ENCODE measurements at regions of chr16 and their contacts with region 1.

Region 1: DNA sequence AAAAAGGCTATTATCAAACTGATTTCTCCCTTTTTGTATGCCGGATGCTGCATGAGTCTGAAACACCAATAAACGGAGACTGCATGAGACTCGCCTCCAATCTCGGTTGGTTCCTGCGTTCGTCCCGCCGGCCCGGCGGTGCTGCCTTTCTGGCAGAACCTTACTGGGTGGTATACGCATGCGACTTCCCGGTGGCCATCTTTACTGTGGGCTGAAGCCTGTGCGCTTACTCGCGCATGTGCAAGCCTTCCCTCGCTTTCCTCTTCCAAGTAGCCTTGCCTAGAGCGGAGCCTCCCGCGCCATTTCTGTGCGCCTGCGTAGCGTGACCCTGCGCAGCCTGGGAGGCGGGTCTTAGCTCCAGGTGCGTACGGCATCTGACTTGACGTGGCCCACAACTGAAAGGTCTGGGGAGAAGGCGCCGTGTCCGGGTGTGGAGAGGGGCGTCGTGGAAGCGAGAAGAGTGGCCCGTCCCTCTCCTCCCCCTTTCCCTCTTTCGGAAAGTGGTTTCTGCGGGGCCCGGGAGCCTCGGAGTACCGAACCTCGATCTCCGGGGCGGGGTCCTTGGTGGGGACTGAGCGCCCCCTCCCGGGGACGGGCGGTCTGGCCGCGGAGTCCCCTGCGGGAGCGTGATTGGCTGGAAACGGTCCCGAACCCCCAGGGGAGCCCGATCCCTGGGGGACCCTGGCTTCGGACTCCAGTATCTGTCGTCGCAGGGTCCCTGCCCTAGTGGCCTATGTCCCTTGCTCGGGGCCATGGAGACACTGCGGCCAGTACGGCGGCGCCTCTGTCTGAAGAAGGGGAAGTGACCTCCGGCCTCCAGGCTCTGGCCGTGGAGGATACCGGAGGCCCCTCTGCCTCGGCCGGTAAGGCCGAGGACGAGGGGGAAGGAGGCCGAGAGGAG is at the start of gene PAGR1:
- DNase-seq: peak; percentile 99
- H3K4me3 Mint-ChIP-seq: peak within 1 kb of the TSS; percentile 93
- H3K27ac Mint-ChIP-seq: peak within 1 kb of the TSS; percentile 96
- H3K4me1 Mint-ChIP-seq: peaks cover 55% of the 10 kb centered on the region
- H3K27me3 Mint-ChIP-seq: no peaks in the 10 kb centered on the region
- total RNA-seq, gene PAGR1: 16.9 to 19.3 TPM

Region 2: DNA sequence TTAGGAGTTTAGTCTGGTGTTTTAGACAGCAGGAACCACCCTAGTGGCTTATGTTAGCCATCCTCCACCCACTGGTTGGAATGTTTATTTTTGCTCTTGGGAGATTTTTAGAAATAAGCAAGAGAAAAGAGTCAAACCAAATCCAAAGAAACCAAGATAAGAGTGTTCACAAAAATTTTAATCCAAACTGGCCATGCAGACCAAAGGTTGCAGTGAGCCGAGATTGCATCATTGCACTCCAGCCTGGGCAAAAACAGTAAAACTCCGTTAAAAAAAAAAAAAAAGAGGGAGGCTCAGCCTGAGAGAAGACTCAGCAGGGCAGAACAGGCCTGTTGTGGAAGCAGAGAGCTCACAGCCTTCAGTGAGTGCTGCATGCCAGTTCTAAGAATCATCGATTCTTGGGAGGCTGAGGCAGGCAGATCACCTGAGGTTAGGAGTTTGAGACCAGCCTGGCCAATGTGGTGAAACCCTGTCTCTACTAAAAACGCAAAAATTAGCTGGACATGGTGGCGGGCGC is 58.0 kb before region 1 on chr16:
- CTCF ChIA-PET with region 1: no interaction called
- intact Hi-C with region 1: no loop called
- DNase-seq: no peak
- H3K4me3 Mint-ChIP-seq: no peak overlapping the region
- H3K27ac Mint-ChIP-seq: no peak overlapping the region
- H3K4me1 Mint-ChIP-seq: peaks cover 38% of the 10 kb centered on the region
- H3K27me3 Mint-ChIP-seq: no peaks in the 10 kb centered on the region

Region 3: DNA sequence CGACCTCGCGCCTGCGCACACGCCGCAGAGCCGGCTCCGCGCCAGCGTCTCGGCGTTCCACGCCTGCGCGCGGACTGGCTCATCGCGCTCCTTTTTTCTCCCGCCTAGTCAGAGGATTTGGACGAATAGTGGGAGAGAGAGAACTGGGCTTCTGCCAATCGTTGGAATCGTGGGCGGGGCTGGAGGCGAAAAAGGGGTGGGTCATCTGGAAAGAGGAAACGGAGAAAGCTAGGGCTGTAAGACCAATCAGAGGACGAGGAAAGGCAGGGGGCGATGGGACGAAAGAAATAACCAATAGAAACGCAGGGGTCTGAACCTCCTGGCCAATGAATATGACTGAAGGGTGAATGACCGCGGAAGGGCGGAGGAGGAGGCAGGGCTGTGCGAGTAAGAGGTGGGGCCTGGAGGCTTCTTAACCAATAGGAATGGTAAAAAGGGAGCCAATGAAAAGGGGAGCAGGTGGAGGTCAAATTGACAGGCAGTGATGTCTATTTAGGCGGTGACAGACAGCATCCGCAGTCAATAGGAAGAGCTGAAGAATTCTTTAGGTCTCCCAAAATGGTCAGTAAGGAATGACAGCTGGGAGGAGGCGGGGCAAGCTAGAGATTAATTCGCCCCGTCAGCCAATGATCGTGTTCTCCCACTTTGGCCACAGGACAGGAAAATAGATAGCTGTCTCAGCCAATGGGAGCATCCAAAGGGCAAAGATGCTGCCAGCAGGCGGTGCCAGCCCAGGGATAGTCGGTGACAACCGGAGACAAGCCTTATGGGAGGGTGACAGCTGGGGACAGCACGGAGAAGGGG is 554.6 kb after region 1 on chr16 and contains the start of gene TBC1D10B:
- CTCF ChIA-PET with region 1: no interaction called
- intact Hi-C with region 1: loop called (anchors 5 kb)
- DNase-seq: peak; percentile 100
- H3K4me3 Mint-ChIP-seq: peak within 1 kb of the TSS; percentile 94
- H3K27ac Mint-ChIP-seq: peak within 1 kb of the TSS; percentile 98
- H3K4me1 Mint-ChIP-seq: peaks cover 40% of the 10 kb centered on the region
- H3K27me3 Mint-ChIP-seq: no peaks in the 10 kb centered on the region
- total RNA-seq, gene TBC1D10B: 36.6 to 38.4 TPM

Measured in activated naive CD4-positive, alpha-beta T cell treated with anti-CD3 and anti-CD28 coated beads for 36 hours (primary cell).